ENCODE measurements at regions of chr11 and their contacts with region 1.

Region 1: GRCh38 chr11:74492974-74493790 is at the start of gene LIPT2:
- DNase-seq: peak; percentile 91
- ATAC-seq: peak; percentile 99
- H3K4me3 ChIP-seq: peak within 1 kb of the TSS; percentile 73 to 86 (median 80)
- H3K27ac ChIP-seq: peak within 1 kb of the TSS; percentile 92
- H3K4me1 ChIP-seq: peaks cover 11% of the 10 kb centered on the region
- H3K27me3 ChIP-seq: no peaks in the 10 kb centered on the region; a peak in 1 of 5 replicates
- CTCF ChIP-seq: no peak; the same call in 1 of the 2 replicates
- EP300 ChIP-seq: no peak
- POLR2A ChIP-seq: peak; percentile 78 to 89
- RAD21 ChIP-seq: peak; percentile 73
- total RNA-seq, gene LIPT2: 3.0 and 5.6 TPM in 2 replicates

Region 2: DNA sequence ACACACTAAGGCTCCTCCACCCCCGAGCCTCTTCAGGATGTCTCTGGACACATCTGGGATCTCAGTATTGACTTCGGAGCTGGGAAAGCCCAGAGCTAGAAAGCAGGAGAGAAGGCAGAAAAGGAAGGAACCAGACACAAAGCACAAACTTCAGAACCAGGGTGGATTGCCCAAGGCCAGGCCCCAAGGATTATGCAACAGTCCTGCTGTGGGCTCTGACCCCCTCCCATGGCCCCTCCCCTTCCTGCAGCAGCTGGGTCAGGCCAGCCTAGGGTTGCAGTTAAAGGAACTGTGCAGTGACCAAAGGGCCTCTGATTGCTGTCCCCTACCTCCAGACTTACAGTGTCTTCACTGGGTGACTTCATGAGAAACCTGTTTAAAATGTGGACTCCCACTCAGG is 31.2 kb before region 1 on chr11:
- CTCF ChIA-PET with region 1: no interaction called
- POLR2A ChIA-PET with region 1: interaction called, 22 read pairs
- in situ Hi-C with region 1: no loop called
- intact Hi-C with region 1: no loop called
- DNase-seq: peak; percentile 66
- ATAC-seq: peak; percentile 95
- H3K4me3 ChIP-seq: peak overlapping the region; percentile 42 to 53 (median 48)
- H3K27ac ChIP-seq: peak overlapping the region; percentile 51
- H3K4me1 ChIP-seq: peaks cover 56% of the 10 kb centered on the region
- H3K27me3 ChIP-seq: no peaks in the 10 kb centered on the region
- CTCF ChIP-seq: no peak
- EP300 ChIP-seq: peak in 1 of 2 experiments; percentile 51; a peak in 1 of 4 replicates
- POLR2A ChIP-seq: peak in 1 of 2 experiments; percentile 44; a peak in 1 of 4 replicates
- RAD21 ChIP-seq: no peak

Region 3: DNA sequence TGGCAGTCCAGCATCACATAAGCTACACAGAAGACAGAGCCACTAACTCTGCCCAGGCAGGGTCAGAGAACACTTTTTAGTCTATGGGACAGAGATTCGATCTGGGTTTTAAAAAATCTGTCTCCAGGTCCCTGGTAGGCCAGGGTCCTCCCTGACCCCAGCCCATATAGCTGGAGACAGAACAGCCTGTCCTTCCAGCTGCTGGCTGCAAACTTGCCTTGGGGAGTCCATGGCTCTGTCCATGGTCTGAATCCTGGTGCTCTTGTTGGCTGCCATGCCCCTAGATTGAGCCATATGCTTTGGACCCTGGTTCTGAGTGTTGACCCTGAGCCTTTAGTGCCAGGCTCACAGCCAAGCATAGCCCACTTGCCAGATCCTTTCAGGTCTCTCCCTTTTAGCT is 13.6 kb after region 1 on chr11:
- CTCF ChIA-PET with region 1: no interaction called
- POLR2A ChIA-PET with region 1: interaction called, 52 read pairs
- in situ Hi-C with region 1: no loop called
- intact Hi-C with region 1: no loop called
- DNase-seq: no peak
- ATAC-seq: peak; percentile 36; the same call in 1 of the 3 replicates
- H3K4me3 ChIP-seq: no peak overlapping the region
- H3K27ac ChIP-seq: no peak overlapping the region
- H3K4me1 ChIP-seq: peaks cover 29% of the 10 kb centered on the region
- H3K27me3 ChIP-seq: no peaks in the 10 kb centered on the region; a peak in 1 of 5 replicates
- CTCF ChIP-seq: no peak
- EP300 ChIP-seq: no peak
- POLR2A ChIP-seq: no peak
- RAD21 ChIP-seq: no peak

Region 4: DNA sequence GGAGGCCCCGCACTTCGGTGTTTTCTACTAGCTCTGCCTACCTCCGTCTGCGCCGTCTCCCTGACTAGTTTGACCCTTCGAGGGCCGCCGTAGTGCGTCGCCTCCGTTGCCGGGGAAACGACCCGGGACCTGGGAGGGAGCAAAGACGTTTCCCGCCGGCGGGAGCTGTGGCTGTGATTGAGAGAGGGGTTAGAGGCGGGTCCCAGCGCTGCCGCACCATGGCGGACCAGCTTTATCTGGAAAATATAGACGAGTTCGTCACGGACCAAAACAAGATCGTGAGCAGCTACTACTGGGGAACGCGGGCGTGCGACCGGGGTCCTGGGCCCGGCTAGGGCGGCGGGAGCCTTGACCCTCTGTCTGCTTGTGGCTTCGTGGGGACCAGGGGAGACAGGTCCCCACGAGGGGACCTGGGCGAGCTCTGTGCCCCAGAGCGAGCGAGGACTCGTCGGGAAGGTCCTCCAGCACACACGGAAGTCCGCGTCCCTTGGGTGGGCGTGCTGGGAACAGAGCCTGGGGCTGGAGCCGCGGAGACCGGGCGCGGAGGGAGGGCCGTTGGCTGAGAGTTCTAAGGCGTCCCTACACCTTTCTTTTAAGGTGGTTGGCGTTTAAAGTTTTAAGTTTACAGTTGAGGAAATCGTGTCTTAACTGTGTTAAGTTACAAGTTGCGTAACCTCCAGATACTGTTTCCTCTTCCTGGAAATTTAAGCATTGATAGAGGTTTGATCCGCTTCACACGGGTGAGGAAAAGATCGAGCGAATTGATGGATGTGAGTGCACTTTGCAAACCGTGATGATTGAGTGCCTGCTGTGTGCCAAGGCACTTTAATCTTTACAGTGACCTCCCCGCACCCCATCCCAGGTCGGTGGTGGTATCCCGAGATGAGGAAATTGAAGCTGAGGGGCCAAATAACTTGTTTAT is 99.5 kb after region 1 on chr11 and contains the start of gene POLD3:
- CTCF ChIA-PET with region 1: no interaction called
- POLR2A ChIA-PET with region 1: interaction called, 14 read pairs
- in situ Hi-C with region 1: no loop called
- intact Hi-C with region 1: no loop called
- DNase-seq: peak; percentile 83
- ATAC-seq: peak; percentile 97
- H3K4me3 ChIP-seq: peak within 1 kb of the TSS; percentile 75 to 96 (median 87)
- H3K27ac ChIP-seq: peak within 1 kb of the TSS; percentile 71
- H3K4me1 ChIP-seq: peaks cover 25% of the 10 kb centered on the region
- H3K27me3 ChIP-seq: no peaks in the 10 kb centered on the region; a peak in 1 of 5 replicates
- CTCF ChIP-seq: no peak
- EP300 ChIP-seq: no peak
- POLR2A ChIP-seq: peak; percentile 56 to 63; a peak in 2 of 4 replicates
- RAD21 ChIP-seq: no peak
- total RNA-seq, gene POLD3: 18.9 and 23.7 TPM in 2 replicates